Activated CD4-positive, alpha-beta memory T cell treated with anti-CD3 and anti-CD28 coated beads for 36 hours (primary cell): ENCODE measurements at regions of chr6 and their contacts with region 1.

Region 1: GRCh38 chr6:90025523-90026061 is 131.3 kb downstream of the GJA10 start:
- DNase-seq: peak; percentile 77
- H3K4me3 Mint-ChIP-seq: peak overlapping the region; percentile 27
- H3K27ac Mint-ChIP-seq: peak overlapping the region; percentile 67
- H3K4me1 Mint-ChIP-seq: peaks cover 77% of the 10 kb centered on the region
- H3K27me3 Mint-ChIP-seq: no peaks in the 10 kb centered on the region

Region 2: DNA sequence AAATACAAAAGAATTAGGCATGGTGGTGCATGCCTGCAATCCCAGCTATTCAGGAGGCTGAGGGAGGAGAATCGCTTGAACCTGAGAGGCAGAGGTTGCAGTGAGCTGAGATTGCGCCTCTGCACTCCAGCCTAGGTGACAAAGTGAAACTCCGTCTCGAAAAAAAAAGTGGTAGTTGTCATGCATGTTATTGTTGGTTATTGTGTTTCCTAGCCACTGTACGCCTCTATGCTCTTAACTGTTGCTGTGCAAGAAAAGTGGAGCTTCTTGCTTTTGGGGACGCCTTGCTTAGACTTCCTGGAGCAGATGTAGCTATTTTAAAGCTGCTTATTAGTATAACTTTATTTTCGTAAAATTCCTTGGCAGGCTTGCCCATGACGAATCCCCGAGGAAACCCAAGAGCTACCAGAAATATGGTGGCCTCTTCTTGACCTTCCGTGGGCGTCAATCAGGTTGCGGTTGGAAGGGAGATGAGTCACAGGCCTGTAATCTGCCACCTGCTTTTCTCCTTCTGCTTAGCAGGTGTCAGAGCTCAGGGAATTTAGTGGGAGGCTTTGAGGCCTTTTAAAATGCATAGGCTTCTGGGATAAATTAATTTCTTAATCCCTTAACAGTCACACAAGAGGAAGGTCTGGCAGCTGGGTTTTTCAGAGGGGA is 727.8 kb before region 1 on chr6:
- CTCF ChIA-PET with region 1: no interaction called
- POLR2A ChIA-PET with region 1: no interaction called
- intact Hi-C with region 1: loop called (anchors 5 kb)
- DNase-seq: peak; percentile 91
- H3K4me3 Mint-ChIP-seq: peak overlapping the region; percentile 59
- H3K27ac Mint-ChIP-seq: peak overlapping the region; percentile 78
- H3K4me1 Mint-ChIP-seq: peaks cover 26% of the 10 kb centered on the region
- H3K27me3 Mint-ChIP-seq: no peaks in the 10 kb centered on the region

Region 3: DNA sequence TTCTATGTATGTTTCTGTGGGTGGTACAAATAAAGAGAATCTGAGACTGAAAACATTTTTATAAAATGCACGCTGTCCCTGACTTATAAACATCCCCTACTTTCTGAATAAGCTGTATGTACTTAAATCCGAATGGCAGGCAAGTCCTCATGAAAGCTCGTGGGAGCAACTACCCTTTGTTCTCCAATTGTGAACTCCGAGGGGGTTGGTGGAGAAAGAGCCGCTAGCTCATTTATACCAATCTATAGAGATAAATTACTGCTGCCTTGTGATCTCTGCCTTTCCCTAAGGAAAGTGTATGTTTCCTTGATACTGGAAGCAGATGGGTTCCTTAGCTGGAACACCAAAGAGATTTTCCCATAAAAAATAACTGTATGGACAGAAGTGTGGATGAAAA is 46.8 kb before region 1 on chr6:
- CTCF ChIA-PET with region 1: no interaction called
- POLR2A ChIA-PET with region 1: no interaction called
- intact Hi-C with region 1: loop called (anchors 1 kb)
- DNase-seq: no peak
- H3K4me3 Mint-ChIP-seq: no peak overlapping the region
- H3K27ac Mint-ChIP-seq: no peak overlapping the region
- H3K4me1 Mint-ChIP-seq: peaks cover 16% of the 10 kb centered on the region
- H3K27me3 Mint-ChIP-seq: no peaks in the 10 kb centered on the region

Region 4: GRCh38 chr6:90000864-90001731 is 24.5 kb before region 1 on chr6:
- CTCF ChIA-PET with region 1: no interaction called
- POLR2A ChIA-PET with region 1: no interaction called
- intact Hi-C with region 1: loop called (anchors 2 kb)
- DNase-seq: peak; percentile 76
- H3K4me3 Mint-ChIP-seq: no peak overlapping the region
- H3K27ac Mint-ChIP-seq: no peak overlapping the region
- H3K4me1 Mint-ChIP-seq: peaks cover 19% of the 10 kb centered on the region
- H3K27me3 Mint-ChIP-seq: no peaks in the 10 kb centered on the region

Region 5: GRCh38 chr6:90036963-90037362 is 11.4 kb after region 1 on chr6:
- CTCF ChIA-PET with region 1: no interaction called
- POLR2A ChIA-PET with region 1: no interaction called
- intact Hi-C with region 1: loop called (anchors 1 kb)
- DNase-seq: no peak
- H3K4me3 Mint-ChIP-seq: no peak overlapping the region
- H3K27ac Mint-ChIP-seq: no peak overlapping the region
- H3K4me1 Mint-ChIP-seq: peaks cover 44% of the 10 kb centered on the region
- H3K27me3 Mint-ChIP-seq: no peaks in the 10 kb centered on the region

Region 6: GRCh38 chr6:90068264-90068663 is 42.7 kb after region 1 on chr6:
- CTCF ChIA-PET with region 1: no interaction called
- POLR2A ChIA-PET with region 1: no interaction called
- intact Hi-C with region 1: loop called (anchors 1 kb)
- DNase-seq: peak; percentile 64
- H3K4me3 Mint-ChIP-seq: no peak overlapping the region
- H3K27ac Mint-ChIP-seq: peak overlapping the region; percentile 6
- H3K4me1 Mint-ChIP-seq: peaks cover 86% of the 10 kb centered on the region
- H3K27me3 Mint-ChIP-seq: no peaks in the 10 kb centered on the region

Region 7: GRCh38 chr6:90121982-90122381 is 96.4 kb after region 1 on chr6:
- CTCF ChIA-PET with region 1: no interaction called
- POLR2A ChIA-PET with region 1: no interaction called
- intact Hi-C with region 1: no loop called
- DNase-seq: peak; percentile 62
- H3K4me3 Mint-ChIP-seq: no peak overlapping the region
- H3K27ac Mint-ChIP-seq: peak overlapping the region; percentile 14
- H3K4me1 Mint-ChIP-seq: peaks cover 24% of the 10 kb centered on the region
- H3K27me3 Mint-ChIP-seq: no peaks in the 10 kb centered on the region

Region 8: DNA sequence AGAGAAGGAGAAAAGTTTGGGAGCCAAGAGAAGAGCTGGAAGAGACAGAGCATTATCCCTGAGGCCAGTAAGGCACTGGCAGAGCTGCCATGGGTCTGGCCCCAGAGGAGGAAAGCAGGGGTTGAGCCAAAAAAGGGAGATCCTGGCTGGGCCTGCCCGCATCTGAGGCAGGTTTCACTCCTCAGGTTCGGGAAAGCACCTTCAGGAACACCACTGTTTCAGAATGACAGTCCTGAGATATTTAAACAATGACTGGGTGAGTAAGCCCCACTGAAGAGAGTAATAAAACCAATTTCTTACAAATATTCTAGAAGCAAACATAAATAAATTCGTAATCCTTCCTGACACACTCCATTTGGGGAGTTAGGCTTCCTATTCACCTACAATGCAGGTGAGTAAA is 118.8 kb after region 1 on chr6:
- CTCF ChIA-PET with region 1: no interaction called
- POLR2A ChIA-PET with region 1: no interaction called
- intact Hi-C with region 1: loop called (anchors 5 kb)
- DNase-seq: peak; percentile 74
- H3K4me3 Mint-ChIP-seq: no peak overlapping the region
- H3K27ac Mint-ChIP-seq: peak overlapping the region; percentile 57
- H3K4me1 Mint-ChIP-seq: peaks cover 54% of the 10 kb centered on the region
- H3K27me3 Mint-ChIP-seq: no peaks in the 10 kb centered on the region